ENCODE measurements at regions of chr18 and their contacts with region 1.

Region 1: DNA sequence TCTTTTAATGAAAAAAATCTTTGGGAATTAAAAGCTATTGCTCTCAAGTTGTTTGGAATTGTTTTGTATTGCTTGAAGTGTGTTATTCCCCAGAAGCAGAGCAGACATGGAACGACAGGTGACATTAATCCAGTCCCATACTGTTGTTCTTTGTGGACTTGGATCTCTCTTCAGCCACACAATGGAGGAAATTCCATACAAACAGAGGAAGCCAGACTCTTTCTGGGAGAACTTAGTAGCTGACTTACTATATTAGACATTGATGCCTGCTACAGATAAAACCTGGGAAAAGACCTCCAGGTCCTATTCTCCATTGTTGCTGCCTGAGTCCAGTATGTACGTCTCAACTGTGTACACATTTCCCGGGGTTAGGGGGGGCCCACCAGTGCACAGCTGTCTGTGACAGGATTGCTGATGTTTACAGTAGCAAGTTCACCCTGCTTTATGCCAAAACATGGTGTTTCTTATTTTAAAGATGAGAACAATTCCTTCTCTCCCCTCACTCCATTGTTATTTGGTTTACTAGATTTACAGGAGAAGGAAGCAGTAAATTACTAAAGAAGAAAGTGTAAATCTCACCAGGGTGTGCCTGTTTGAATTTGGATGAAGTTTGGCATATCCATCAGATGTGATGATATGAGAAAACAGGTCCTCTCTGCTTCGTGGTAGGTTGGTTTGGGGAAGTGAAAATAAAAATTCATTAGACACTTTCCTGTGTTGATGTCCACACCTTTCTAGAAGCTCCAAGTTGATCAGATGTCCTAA is 142.4 kb upstream of the RBBP8 start:
- DNase-seq: no peak
- H3K4me3 ChIP-seq: no peak overlapping the region
- H3K27ac ChIP-seq: no peak overlapping the region
- H3K4me1 ChIP-seq: peaks cover 3% of the 10 kb centered on the region
- H3K27me3 ChIP-seq: no peaks in the 10 kb centered on the region
- CTCF ChIP-seq: no peak

Region 2: GRCh38 chr18:22503803-22504202 is 286.9 kb before region 1 on chr18:
- CTCF ChIA-PET with region 1: no interaction called
- dilution Hi-C with region 1: no loop called
- in situ Hi-C with region 1: no loop called
- intact Hi-C with region 1: no loop called
- DNase-seq: no peak
- H3K4me3 ChIP-seq: no peak overlapping the region
- H3K27ac ChIP-seq: no peak overlapping the region
- H3K4me1 ChIP-seq: peaks cover 16% of the 10 kb centered on the region
- H3K27me3 ChIP-seq: no peaks in the 10 kb centered on the region
- CTCF ChIP-seq: no peak

Region 3: GRCh38 chr18:22765896-22766295 is 24.8 kb before region 1 on chr18:
- CTCF ChIA-PET with region 1: no interaction called
- dilution Hi-C with region 1: no loop called
- in situ Hi-C with region 1: no loop called
- intact Hi-C with region 1: no loop called
- DNase-seq: no peak
- H3K4me3 ChIP-seq: no peak overlapping the region
- H3K27ac ChIP-seq: no peak overlapping the region
- H3K4me1 ChIP-seq: no peaks in the 10 kb centered on the region
- H3K27me3 ChIP-seq: peaks cover 3% of the 10 kb centered on the region
- CTCF ChIP-seq: no peak

Region 4: DNA sequence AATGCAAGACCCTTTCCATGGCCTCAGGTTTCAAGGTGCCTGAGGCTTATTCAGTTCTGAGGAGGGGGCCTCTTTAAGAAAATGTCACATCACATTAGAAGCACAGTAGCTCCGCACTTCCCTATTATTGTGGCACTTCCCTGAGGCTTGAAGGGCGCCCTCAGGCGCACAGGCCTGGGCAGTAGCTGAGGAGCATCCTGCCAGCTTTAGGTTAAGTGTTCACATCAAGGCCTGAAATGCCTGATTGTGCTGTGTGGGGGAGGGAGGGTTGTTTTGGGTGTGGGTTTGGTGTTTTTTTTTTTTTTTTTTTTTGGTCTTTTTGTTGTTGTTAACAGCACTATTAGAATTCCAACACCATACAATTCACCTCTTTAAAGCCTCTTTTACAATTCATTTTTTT is 452.5 kb after region 1 on chr18:
- CTCF ChIA-PET with region 1: no interaction called
- dilution Hi-C with region 1: loop called (anchors 10 kb)
- in situ Hi-C with region 1: no loop called
- intact Hi-C with region 1: no loop called
- DNase-seq: no peak
- H3K4me3 ChIP-seq: no peak overlapping the region
- H3K27ac ChIP-seq: no peak overlapping the region
- H3K4me1 ChIP-seq: peaks cover 10% of the 10 kb centered on the region
- H3K27me3 ChIP-seq: no peaks in the 10 kb centered on the region
- CTCF ChIP-seq: no peak